CD8-positive, alpha-beta memory T cell (primary cell): ENCODE measurements at regions of chr10 and their contacts with region 1.

Region 1: GRCh38 chr10:91251430-91252056 is 31.1 kb downstream of the PCGF5 start:
- DNase-seq: peak; percentile 5 to 68 (median 51)
- H3K4me3 ChIP-seq: no peak overlapping the region
- H3K4me3 Mint-ChIP-seq: no peak overlapping the region
- H3K27ac ChIP-seq: no peak overlapping the region
- H3K27ac Mint-ChIP-seq: peak overlapping the region in 1 of 8 donors; percentile 34
- H3K4me1 ChIP-seq: peaks cover 15% of the 10 kb centered on the region
- H3K4me1 Mint-ChIP-seq: peaks cover 4 to 9% (median 8%) of the 10 kb centered on the region in 3 donors
- H3K27me3 ChIP-seq: no peaks in the 10 kb centered on the region
- H3K27me3 Mint-ChIP-seq: no peaks in the 10 kb centered on the region

Region 2: DNA sequence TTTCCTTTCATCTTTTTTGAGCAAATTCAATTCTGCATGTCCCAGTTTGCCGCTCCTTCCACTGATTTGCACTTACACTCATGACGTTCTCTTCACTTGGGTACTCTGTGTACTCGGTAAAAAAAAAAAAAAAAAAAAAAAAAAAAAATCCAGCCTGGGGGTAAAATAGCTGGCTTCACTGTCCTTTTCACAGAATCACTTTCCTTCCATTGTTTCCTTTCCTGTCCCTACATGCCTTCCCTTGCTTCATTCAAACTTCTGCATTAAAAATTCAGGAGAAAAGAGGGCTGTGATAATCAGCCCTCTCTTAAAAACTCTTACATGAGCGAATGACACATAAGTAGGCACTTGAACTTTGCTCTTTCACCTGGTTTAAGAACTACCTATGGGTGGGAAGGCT is 339.4 kb before region 1 on chr10:
- CTCF ChIA-PET with region 1: interaction called, 21 read pairs
- POLR2A ChIA-PET with region 1: no interaction called
- DNase-seq: no peak
- H3K4me3 ChIP-seq: no peak overlapping the region
- H3K4me3 Mint-ChIP-seq: no peak overlapping the region
- H3K27ac ChIP-seq: no peak overlapping the region
- H3K27ac Mint-ChIP-seq: no peak overlapping the region
- H3K4me1 ChIP-seq: no peaks in the 10 kb centered on the region
- H3K4me1 Mint-ChIP-seq: peaks cover 2 to 7% (median 3%) of the 10 kb centered on the region in 3 donors
- H3K27me3 ChIP-seq: no peaks in the 10 kb centered on the region
- H3K27me3 Mint-ChIP-seq: peaks cover 6 to 16% of the 10 kb centered on the region in 2 donors

Region 3: GRCh38 chr10:90987383-90987782 is 264.2 kb before region 1 on chr10:
- CTCF ChIA-PET with region 1: no interaction called
- POLR2A ChIA-PET with region 1: no interaction called
- DNase-seq: no peak
- H3K4me3 ChIP-seq: no peak overlapping the region
- H3K4me3 Mint-ChIP-seq: no peak overlapping the region
- H3K27ac ChIP-seq: no peak overlapping the region
- H3K27ac Mint-ChIP-seq: no peak overlapping the region
- H3K4me1 ChIP-seq: no peaks in the 10 kb centered on the region
- H3K4me1 Mint-ChIP-seq: no peaks in the 10 kb centered on the region
- H3K27me3 ChIP-seq: no peaks in the 10 kb centered on the region
- H3K27me3 Mint-ChIP-seq: peaks cover 0 to 3% of the 10 kb centered on the region in 2 donors

Region 4: GRCh38 chr10:91006001-91006751 is 245.4 kb before region 1 on chr10:
- CTCF ChIA-PET with region 1: interaction called, 108 read pairs
- POLR2A ChIA-PET with region 1: interaction called, 3 read pairs
- DNase-seq: peak; percentile 37 to 71 (median 52)
- H3K4me3 ChIP-seq: no peak overlapping the region
- H3K4me3 Mint-ChIP-seq: peak overlapping the region; percentile 0 to 87 (median 71)
- H3K27ac ChIP-seq: no peak overlapping the region
- H3K27ac Mint-ChIP-seq: peak overlapping the region in 6 of 8 donors; percentile 62 to 87 (median 76)
- H3K4me1 ChIP-seq: peaks cover 17% of the 10 kb centered on the region
- H3K4me1 Mint-ChIP-seq: peaks cover 18 to 27% (median 24%) of the 10 kb centered on the region in 3 donors
- H3K27me3 ChIP-seq: no peaks in the 10 kb centered on the region
- H3K27me3 Mint-ChIP-seq: peaks cover 2 to 3% of the 10 kb centered on the region in 2 donors

Region 5: DNA sequence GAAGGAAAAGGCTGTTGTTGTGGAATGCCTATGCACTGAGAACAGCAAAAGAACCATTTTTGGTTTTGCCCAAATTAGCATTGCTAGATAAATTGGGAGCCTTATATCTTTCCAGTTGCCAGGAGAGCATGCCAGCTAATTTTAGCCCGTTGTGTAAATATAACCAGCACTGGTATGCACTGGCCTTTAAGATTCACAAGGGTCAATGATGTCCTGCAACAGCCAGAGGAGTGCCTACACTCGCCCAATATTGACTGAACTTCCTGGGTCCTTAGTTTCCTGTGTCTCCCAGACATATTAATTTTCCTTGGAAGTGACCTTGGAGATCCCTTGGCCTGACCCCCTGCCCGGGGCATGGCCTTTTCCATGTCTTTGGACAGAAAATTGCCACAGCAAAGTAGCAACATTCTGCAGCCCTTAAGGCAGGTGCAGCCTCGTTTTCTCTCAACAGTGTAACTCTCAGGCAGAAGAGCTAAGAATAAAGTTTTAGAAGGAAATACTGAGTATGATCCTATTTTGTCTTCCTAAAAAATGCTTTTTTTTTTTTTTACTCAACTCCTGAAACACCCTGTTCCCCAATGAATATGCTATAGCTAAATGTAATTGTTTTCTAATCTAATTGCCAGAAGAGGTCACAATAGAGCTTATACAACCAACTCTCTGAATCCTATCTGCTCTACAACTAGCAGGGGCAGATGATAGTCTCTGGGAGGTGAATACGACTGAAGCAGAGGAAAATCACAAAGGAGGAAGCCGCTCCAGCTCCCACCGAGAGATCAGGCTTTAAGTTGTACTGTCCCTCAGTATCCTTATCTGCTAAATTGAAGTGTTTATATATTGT is 163.0 kb before region 1 on chr10:
- CTCF ChIA-PET with region 1: interaction called, 26 read pairs
- POLR2A ChIA-PET with region 1: interaction called, 5 read pairs
- DNase-seq: peak in 2 of 5 donors; percentile 11 to 29
- H3K4me3 ChIP-seq: no peak overlapping the region
- H3K4me3 Mint-ChIP-seq: no peak overlapping the region
- H3K27ac ChIP-seq: no peak overlapping the region
- H3K27ac Mint-ChIP-seq: no peak overlapping the region
- H3K4me1 ChIP-seq: no peaks in the 10 kb centered on the region
- H3K4me1 Mint-ChIP-seq: no peaks in the 10 kb centered on the region
- H3K27me3 ChIP-seq: no peaks in the 10 kb centered on the region
- H3K27me3 Mint-ChIP-seq: peaks cover 0 to 5% of the 10 kb centered on the region in 2 donors

Region 6: DNA sequence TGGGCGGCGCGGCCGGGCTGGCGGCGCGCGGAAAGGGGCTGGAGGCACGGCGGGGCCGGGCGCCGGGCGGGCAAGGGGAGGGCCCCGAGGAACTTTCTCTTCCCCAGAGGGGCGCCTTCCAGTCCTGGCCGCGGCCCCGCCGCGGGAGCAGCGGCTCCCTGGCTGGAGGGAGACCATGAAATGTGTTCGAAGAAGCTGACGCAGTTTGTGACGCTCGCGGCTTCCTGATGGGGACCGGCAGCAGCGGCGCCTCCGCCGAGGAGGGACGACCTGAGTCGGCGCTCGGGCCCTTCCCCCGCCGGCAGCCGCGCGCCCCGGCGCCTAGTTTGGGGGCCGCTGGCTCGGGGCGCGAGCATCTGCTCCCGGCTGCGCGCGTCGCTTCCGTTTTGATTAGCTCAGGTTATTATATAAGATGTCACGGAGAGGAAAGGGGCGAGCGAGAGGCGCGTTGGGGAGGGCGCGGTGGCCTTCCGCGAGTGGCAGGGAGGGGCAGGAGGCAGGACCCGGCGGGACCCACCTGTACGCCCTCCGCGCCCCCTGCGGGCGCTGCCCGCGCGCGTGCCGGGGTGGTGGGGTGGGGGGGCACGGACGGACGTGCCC is 88.2 kb before region 1 on chr10:
- CTCF ChIA-PET with region 1: interaction called, 21 read pairs
- POLR2A ChIA-PET with region 1: interaction called, 19 read pairs
- DNase-seq: peak; percentile 79 to 93 (median 90)
- H3K4me3 ChIP-seq: peak overlapping the region; percentile 71
- H3K4me3 Mint-ChIP-seq: peak overlapping the region; percentile 88 to 94 (median 91)
- H3K27ac ChIP-seq: peak overlapping the region; percentile 91
- H3K27ac Mint-ChIP-seq: peak overlapping the region; percentile 96 to 99 (median 98)
- H3K4me1 ChIP-seq: peaks cover 36% of the 10 kb centered on the region
- H3K4me1 Mint-ChIP-seq: peaks cover 52 to 75% (median 61%) of the 10 kb centered on the region in 3 donors
- H3K27me3 ChIP-seq: no peaks in the 10 kb centered on the region
- H3K27me3 Mint-ChIP-seq: peaks cover 0 to 1% of the 10 kb centered on the region in 2 donors

Region 7: DNA sequence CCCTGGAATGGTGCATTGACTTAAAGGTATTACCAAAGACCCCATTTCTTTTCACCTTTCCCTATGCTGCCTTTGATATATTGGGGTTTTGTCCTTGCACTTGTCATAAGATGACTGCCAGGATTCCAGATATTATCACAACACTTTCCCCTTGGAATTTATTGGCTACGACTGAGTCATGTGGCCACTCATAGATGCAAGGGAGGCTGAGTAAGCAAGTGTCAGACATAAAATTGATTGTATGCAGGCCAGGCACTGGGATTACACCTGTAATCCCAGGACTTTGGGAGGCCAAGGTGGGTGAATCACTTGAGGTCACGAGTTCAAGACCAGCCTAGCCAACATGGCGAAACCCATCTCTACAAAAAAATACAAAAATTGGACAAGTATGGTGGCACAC is 297.8 kb after region 1 on chr10:
- CTCF ChIA-PET with region 1: no interaction called
- POLR2A ChIA-PET with region 1: no interaction called
- DNase-seq: no peak
- H3K4me3 ChIP-seq: no peak overlapping the region
- H3K4me3 Mint-ChIP-seq: no peak overlapping the region
- H3K27ac ChIP-seq: no peak overlapping the region
- H3K27ac Mint-ChIP-seq: no peak overlapping the region
- H3K4me1 ChIP-seq: no peaks in the 10 kb centered on the region
- H3K4me1 Mint-ChIP-seq: no peaks in the 10 kb centered on the region
- H3K27me3 ChIP-seq: no peaks in the 10 kb centered on the region
- H3K27me3 Mint-ChIP-seq: peaks cover 0 to 10% of the 10 kb centered on the region in 2 donors